ENCODE measurements at regions of chr11 and their contacts with region 1.

Region 1: GRCh38 chr11:72250661-72251465 is 6.9 kb upstream of the PHOX2A start:
- DNase-seq: no peak
- H3K4me3 ChIP-seq: no peak overlapping the region
- CTCF ChIP-seq: no peak

Region 2: GRCh38 chr11:72238040-72238450 is 12.8 kb before region 1 on chr11:
- CTCF ChIA-PET with region 1: interaction called, 24 read pairs
- POLR2A ChIA-PET with region 1: interaction called, 3 read pairs
- DNase-seq: no peak
- H3K4me3 ChIP-seq: no peak overlapping the region
- CTCF ChIP-seq: peak; percentile 82